PC-9 (cell line): ENCODE measurements at regions of chr11 and their contacts with region 1.

Region 1: GRCh38 chr11:4636962-4637661 is at the start of gene OR51D1:
- DNase-seq: peak in 1 of 2 experiments; percentile 24
- H3K4me3 ChIP-seq: no peak within 1 kb of the TSS
- H3K27ac ChIP-seq: no peak within 1 kb of the TSS
- H3K4me1 ChIP-seq: no peaks in the 10 kb centered on the region
- H3K27me3 ChIP-seq: 0 out of 2 replicates have a peak, but pooled peaks cover 5% of the 10 kb centered on the region
- CTCF ChIP-seq: peak; percentile 74
- total RNA-seq, gene OR51D1: not detected in 2 replicates

Region 2: GRCh38 chr11:4496557-4497275 is 140.4 kb before region 1 on chr11:
- CTCF ChIA-PET with region 1: no interaction called
- POLR2A ChIA-PET with region 1: no interaction called
- intact Hi-C with region 1: no loop called
- DNase-seq: peak in 1 of 2 experiments; percentile 64
- H3K4me3 ChIP-seq: no peak overlapping the region
- H3K27ac ChIP-seq: no peak overlapping the region
- H3K4me1 ChIP-seq: no peaks in the 10 kb centered on the region
- H3K27me3 ChIP-seq: no peaks in the 10 kb centered on the region; the same call in 1 of the 2 replicates
- CTCF ChIP-seq: no peak

Region 3: GRCh38 chr11:5004424-5005274 is 367.5 kb after region 1 on chr11:
- CTCF ChIA-PET with region 1: no interaction called
- POLR2A ChIA-PET with region 1: no interaction called
- intact Hi-C with region 1: loop called (anchors 2 kb)
- DNase-seq: peak in 1 of 2 experiments; percentile 6
- H3K4me3 ChIP-seq: no peak overlapping the region
- H3K27ac ChIP-seq: no peak overlapping the region
- H3K4me1 ChIP-seq: no peaks in the 10 kb centered on the region
- H3K27me3 ChIP-seq: no peaks in the 10 kb centered on the region
- CTCF ChIP-seq: peak; percentile 61

Region 4: GRCh38 chr11:5808500-5809121 is 1171.5 kb after region 1 on chr11 and contains the start of gene OR52N2:
- CTCF ChIA-PET with region 1: no interaction called
- POLR2A ChIA-PET with region 1: no interaction called
- intact Hi-C with region 1: loop called (anchors 5 kb)
- DNase-seq: peak; percentile 35 to 37
- H3K4me3 ChIP-seq: peak within 1 kb of the TSS; percentile 35; the same call in 1 of the 2 replicates
- H3K27ac ChIP-seq: no peak within 1 kb of the TSS
- H3K4me1 ChIP-seq: no peaks in the 10 kb centered on the region
- H3K27me3 ChIP-seq: no peaks in the 10 kb centered on the region
- CTCF ChIP-seq: peak; percentile 78
- total RNA-seq, gene OR52N2: not detected in 2 replicates